SK-N-SH (cell line): ENCODE measurements at regions of chr10 and their contacts with region 1.

Region 1: GRCh38 chr10:14822879-14823755 is 14.7 kb downstream of the CDNF start:
- DNase-seq: peak; percentile 62
- H3K4me3 ChIP-seq: no peak overlapping the region
- H3K27ac ChIP-seq: peak overlapping the region in 1 of 2 experiments; percentile 19; a peak in 1 of 4 replicates
- H3K4me1 ChIP-seq: peaks cover 0 to 5% of the 10 kb centered on the region in 2 experiments; a peak in 1 of 4 replicates
- H3K27me3 ChIP-seq: no peaks in the 10 kb centered on the region; the same call in 1 of the 2 replicates
- CTCF ChIP-seq: peak; percentile 75
- EP300 ChIP-seq: peak in 1 of 2 experiments; percentile 65; a peak in 1 of 4 replicates
- RAD21 ChIP-seq: peak; percentile 86

Region 2: GRCh38 chr10:14543046-14543903 is 279.8 kb before region 1 on chr10:
- CTCF ChIA-PET with region 1: interaction called, 54 read pairs
- POLR2A ChIA-PET with region 1: no interaction called
- DNase-seq: no peak
- H3K4me3 ChIP-seq: no peak overlapping the region
- H3K27ac ChIP-seq: no peak overlapping the region
- H3K4me1 ChIP-seq: peaks cover 0 to 8% of the 10 kb centered on the region in 2 experiments; a peak in 2 of 4 replicates
- H3K27me3 ChIP-seq: no peaks in the 10 kb centered on the region
- CTCF ChIP-seq: peak; percentile 44; the same call in 1 of the 2 replicates
- EP300 ChIP-seq: no peak
- RAD21 ChIP-seq: 0 out of 2 replicates have a peak, but pooled peaks have one; percentile 25

Region 3: DNA sequence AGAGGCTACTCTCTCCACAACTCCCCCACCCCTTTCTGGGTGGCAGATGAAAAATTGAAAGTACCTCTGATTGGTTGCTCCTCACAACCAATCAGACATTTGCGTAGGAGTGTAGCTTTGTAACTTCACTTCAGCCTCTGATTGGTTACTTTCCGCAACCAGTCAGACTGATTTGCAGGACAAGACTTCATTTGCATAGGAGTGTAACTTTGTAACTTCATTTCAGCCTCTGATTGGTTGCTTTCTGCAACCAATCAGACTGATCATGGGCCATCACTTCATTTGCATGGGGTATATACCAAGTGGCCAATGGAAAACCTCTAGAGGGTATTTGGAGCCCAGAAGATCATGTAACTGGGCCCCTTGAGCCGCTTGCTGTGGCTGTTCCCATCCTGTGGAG is 10.8 kb before region 1 on chr10:
- CTCF ChIA-PET with region 1: interaction called, 13 read pairs
- POLR2A ChIA-PET with region 1: no interaction called
- DNase-seq: no peak
- H3K4me3 ChIP-seq: no peak overlapping the region
- H3K27ac ChIP-seq: no peak overlapping the region
- H3K4me1 ChIP-seq: no peaks in the 10 kb centered on the region
- H3K27me3 ChIP-seq: no peaks in the 10 kb centered on the region
- CTCF ChIP-seq: no peak
- EP300 ChIP-seq: no peak
- RAD21 ChIP-seq: no peak

Region 4: GRCh38 chr10:14837757-14838581 is 14.9 kb after region 1 on chr10 and contains the starts of genes CDNF, HSPA14 and MSANTD7:
- CTCF ChIA-PET with region 1: interaction called, 10 read pairs
- POLR2A ChIA-PET with region 1: no interaction called
- DNase-seq: peak; percentile 97
- H3K4me3 ChIP-seq: peak within 1 kb of the TSS; percentile 93 to 99
- H3K27ac ChIP-seq: peak within 1 kb of the TSS; percentile 81 to 93
- H3K4me1 ChIP-seq: peaks cover 0 to 7% of the 10 kb centered on the region in 2 experiments; a peak in 1 of 4 replicates
- H3K27me3 ChIP-seq: no peaks in the 10 kb centered on the region
- CTCF ChIP-seq: no peak
- EP300 ChIP-seq: no peak
- RAD21 ChIP-seq: no peak
- polyA plus RNA-seq, gene CDNF: 1.0 and 1.2 TPM in 2 replicates
- polyA plus RNA-seq, gene HSPA14: 8.8 and 10.8 TPM in 2 replicates
- polyA plus RNA-seq, gene MSANTD7: 3.2 and 3.9 TPM in 2 replicates